H1 (cell line): ENCODE measurements at regions of chr11 and their contacts with region 1.

Region 1: GRCh38 chr11:73204711-73205121 is 13.4 kb upstream of the P2RY2 start:
- DNase-seq: no peak
- H3K4me3 ChIP-seq: no peak overlapping the region
- H3K27ac ChIP-seq: no peak overlapping the region
- H3K4me1 ChIP-seq: peaks cover 7 to 16% (median 10%) of the 10 kb centered on the region in 4 experiments; a peak in 6 of 7 replicates
- H3K27me3 ChIP-seq: no peaks in the 10 kb centered on the region
- CTCF ChIP-seq: no peak
- EP300 ChIP-seq: no peak
- POLR2A ChIP-seq: no peak
- RAD21 ChIP-seq: no peak

Region 2: DNA sequence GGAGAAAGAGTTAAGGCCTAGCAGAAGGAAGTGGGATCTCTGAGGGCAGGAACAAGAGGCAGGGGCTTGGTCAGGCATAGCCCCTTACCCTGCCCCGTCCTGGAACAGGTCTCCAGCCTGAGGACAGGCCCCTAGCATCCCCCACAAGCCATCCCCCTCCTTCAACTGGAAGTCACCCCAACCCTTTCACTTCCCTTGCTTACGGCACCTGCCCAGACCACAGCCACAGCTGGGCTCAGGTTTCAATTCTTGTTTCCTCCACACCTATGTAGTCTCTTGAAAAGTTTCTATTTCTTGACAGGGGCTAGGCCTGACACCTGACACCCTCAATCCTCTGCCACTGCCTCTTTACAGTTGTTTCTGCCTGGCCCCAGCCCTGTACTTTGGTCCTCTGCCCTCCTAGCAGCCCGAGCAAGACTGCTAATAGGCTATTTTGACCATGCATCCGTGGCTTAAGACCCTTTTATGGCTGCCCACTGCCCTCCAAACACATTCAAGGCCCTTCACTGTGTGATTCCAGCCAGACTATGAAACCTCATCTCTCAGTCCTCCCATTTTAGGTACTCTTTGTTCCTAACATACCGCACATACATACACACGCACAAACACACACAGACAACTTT is 51.7 kb before region 1 on chr11:
- CTCF ChIA-PET with region 1: no interaction called
- POLR2A ChIA-PET with region 1: no interaction called
- DNase-seq: no peak
- H3K4me3 ChIP-seq: no peak overlapping the region
- H3K27ac ChIP-seq: no peak overlapping the region
- H3K4me1 ChIP-seq: peaks cover 4 to 14% (median 7%) of the 10 kb centered on the region in 4 experiments; a peak in 6 of 7 replicates
- H3K27me3 ChIP-seq: no peaks in the 10 kb centered on the region
- CTCF ChIP-seq: no peak
- EP300 ChIP-seq: no peak
- POLR2A ChIP-seq: no peak
- RAD21 ChIP-seq: no peak

Region 3: DNA sequence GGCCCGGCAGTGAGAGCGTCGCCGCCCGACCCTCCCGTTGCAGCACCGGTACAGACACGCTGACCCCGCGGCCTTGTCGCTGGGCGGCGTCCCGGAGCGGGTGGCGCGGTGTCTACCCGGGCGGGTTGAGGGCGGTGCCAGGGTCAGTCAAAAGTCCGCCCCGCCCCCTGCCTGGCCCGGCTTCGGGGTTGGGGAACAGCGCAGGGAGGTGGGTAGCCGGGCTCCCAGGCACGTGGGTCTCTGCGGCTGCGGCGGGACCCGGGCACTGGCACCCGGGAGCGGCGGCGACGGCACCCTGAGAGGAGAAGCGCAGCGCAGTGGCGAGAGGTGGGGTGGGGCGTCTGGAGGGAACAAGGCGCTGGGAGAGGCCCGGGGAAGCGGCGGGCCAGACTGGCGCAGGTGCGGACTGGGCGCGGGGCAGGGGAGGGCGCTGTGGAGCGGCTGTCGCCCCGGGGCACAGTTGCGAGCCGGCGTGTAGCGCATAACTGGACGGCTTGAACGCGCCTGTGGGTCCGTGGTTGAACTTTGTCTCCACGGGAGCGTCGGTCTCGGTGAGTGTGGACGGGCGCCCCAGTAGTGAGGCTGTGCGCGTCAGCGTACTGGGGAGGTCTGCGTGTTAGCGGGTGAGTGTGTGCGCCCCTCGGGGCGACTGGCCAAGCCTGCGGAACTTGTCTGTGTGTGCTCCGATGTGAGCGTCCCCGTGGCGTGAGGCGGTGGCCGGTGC is 13.6 kb after region 1 on chr11 and contains the start of gene P2RY2:
- CTCF ChIA-PET with region 1: interaction called, 19 read pairs
- POLR2A ChIA-PET with region 1: interaction called, 3 read pairs
- DNase-seq: peak; percentile 15 to 91
- H3K4me3 ChIP-seq: peak within 1 kb of the TSS; percentile 58 to 69 (median 64)
- H3K27ac ChIP-seq: no peak within 1 kb of the TSS
- H3K4me1 ChIP-seq: peaks cover 0 to 5% (median 2%) of the 10 kb centered on the region in 4 experiments; a peak in 5 of 7 replicates
- H3K27me3 ChIP-seq: peaks cover 2 to 35% (median 31%) of the 10 kb centered on the region in 4 experiments
- CTCF ChIP-seq: peak; percentile 47 to 70 (median 64)
- EP300 ChIP-seq: no peak
- POLR2A ChIP-seq: no peak
- RAD21 ChIP-seq: peak; percentile 22 to 27; a peak in 2 of 4 replicates
- total RNA-seq, gene P2RY2: 1.0 and 1.2 TPM in 2 replicates